ENCODE measurements at regions of chr2 and their contacts with region 1.

Region 1: GRCh38 chr2:197086500-197086899 is 160.0 kb upstream of the PGAP1 start:
- DNase-seq: no peak
- H3K4me3 Mint-ChIP-seq: no peak overlapping the region
- H3K27ac Mint-ChIP-seq: no peak overlapping the region
- H3K4me1 Mint-ChIP-seq: no peaks in the 10 kb centered on the region
- H3K27me3 Mint-ChIP-seq: no peaks in the 10 kb centered on the region

Region 2: GRCh38 chr2:197075759-197076337 is 10.7 kb before region 1 on chr2:
- CTCF ChIA-PET with region 1: interaction called, 10 read pairs
- DNase-seq: no peak
- H3K4me3 Mint-ChIP-seq: no peak overlapping the region
- H3K27ac Mint-ChIP-seq: peak overlapping the region; percentile 43
- H3K4me1 Mint-ChIP-seq: peaks cover 30% of the 10 kb centered on the region
- H3K27me3 Mint-ChIP-seq: no peaks in the 10 kb centered on the region

Measured in activated naive CD4-positive, alpha-beta T cell treated with anti-CD3 and anti-CD28 coated beads, Interleukin-2, amount 10 ng/mL, durations not matched to agents 7 days and 5 days (primary cell).